Activated CD4-positive, alpha-beta memory T cell treated with anti-CD3 and anti-CD28 coated beads for 36 hours (primary cell): ENCODE measurements at regions of chr14 and their contacts with region 1.

Region 1: GRCh38 chr14:71103662-71104484 is 196.6 kb downstream of the PCNX1 start:
- DNase-seq: no peak
- H3K4me3 Mint-ChIP-seq: no peak overlapping the region
- H3K27ac Mint-ChIP-seq: no peak overlapping the region
- H3K4me1 Mint-ChIP-seq: peaks cover 13% of the 10 kb centered on the region
- H3K27me3 Mint-ChIP-seq: no peaks in the 10 kb centered on the region

Region 2: DNA sequence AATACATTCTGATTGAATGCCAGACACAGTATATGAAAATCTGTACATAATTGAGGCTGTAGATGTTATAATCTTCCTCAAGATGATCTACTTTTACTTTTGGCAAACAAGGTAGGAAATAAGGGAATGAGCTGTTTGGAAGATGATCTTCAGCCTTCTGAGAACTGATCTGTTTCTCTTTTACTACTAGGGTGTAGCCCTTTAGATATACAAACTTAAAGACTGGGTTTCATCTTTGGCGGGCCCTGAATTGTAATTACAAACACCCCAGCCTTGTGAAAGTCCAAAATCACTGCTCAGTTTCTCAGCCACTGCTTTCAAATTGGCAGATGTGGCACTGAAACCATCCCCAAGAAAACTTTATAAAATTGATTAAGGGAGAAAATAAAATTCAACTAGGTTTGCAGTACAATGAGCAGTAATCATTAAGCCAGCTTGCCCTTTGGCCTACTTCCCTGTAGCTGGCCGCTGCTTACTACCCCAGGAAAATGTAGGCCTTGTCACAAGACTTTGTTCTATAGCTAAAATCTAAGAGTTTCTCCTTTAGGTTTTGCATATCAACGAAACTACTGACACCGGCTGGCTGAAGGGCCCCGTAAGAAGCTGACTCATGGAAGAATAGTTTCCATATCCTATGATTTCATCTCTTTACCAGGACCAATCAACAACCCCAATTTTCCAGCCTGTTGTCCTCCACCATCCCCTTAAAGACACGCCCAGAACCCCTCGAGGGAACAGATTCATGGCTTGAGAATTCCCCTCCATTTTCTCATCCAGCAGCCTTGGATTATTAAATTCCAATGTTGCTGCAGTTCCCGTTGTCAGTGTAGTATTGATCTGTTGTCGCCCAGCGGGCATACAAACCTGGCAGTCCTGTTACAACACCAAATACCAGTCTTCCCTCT is 14.2 kb after region 1 on chr14:
- CTCF ChIA-PET with region 1: interaction called, 17 read pairs
- POLR2A ChIA-PET with region 1: interaction called, 3 read pairs
- intact Hi-C with region 1: no loop called
- DNase-seq: peak; percentile 23
- H3K4me3 Mint-ChIP-seq: no peak overlapping the region
- H3K27ac Mint-ChIP-seq: peak overlapping the region; percentile 85
- H3K4me1 Mint-ChIP-seq: peaks cover 24% of the 10 kb centered on the region
- H3K27me3 Mint-ChIP-seq: no peaks in the 10 kb centered on the region

Region 3: DNA sequence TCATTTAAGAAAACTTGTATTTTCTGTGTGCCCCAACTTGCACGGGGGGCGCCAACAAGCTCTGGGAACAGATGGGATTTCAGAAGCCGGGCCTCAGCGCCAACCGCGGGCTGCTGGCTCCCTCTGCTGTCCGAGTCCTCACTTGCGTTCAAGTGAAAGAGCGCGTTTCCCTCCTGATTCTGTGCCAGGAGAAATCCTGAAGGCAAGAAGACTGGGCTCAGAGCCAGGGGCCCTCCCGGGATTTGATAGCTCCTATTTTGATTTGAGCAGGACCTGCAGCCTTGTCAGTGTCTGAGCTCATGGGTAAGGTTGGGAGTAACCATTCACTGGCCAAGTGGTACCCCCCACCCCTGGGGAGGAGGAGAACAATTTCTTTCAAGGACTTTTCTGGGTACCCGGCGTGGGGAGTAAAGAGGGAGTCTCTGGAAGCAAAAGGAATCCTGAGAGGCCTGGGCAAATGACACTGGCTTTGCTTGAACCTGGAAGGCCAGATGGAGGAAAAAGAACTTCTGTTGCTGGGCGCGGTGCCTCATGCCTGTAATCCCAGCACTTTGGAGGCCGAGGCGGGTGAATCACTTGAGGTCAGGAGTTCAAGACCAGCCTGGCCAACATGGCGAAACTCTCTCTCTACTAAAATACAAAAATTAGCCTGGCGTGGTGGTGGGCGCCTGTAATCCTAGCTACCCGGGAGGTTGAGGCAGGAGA is 649.4 kb after region 1 on chr14:
- CTCF ChIA-PET with region 1: interaction called, 47 read pairs
- POLR2A ChIA-PET with region 1: no interaction called
- intact Hi-C with region 1: no loop called
- DNase-seq: peak; percentile 79
- H3K4me3 Mint-ChIP-seq: no peak overlapping the region
- H3K27ac Mint-ChIP-seq: no peak overlapping the region
- H3K4me1 Mint-ChIP-seq: no peaks in the 10 kb centered on the region
- H3K27me3 Mint-ChIP-seq: peaks cover 3% of the 10 kb centered on the region

Region 4: GRCh38 chr14:71933001-71933587 is 829.2 kb after region 1 on chr14:
- CTCF ChIA-PET with region 1: no interaction called
- POLR2A ChIA-PET with region 1: no interaction called
- intact Hi-C with region 1: no loop called
- DNase-seq: peak; percentile 34
- H3K4me3 Mint-ChIP-seq: peak overlapping the region; percentile 51
- H3K27ac Mint-ChIP-seq: no peak overlapping the region
- H3K4me1 Mint-ChIP-seq: peaks cover 18% of the 10 kb centered on the region
- H3K27me3 Mint-ChIP-seq: peaks cover 54% of the 10 kb centered on the region

Region 5: DNA sequence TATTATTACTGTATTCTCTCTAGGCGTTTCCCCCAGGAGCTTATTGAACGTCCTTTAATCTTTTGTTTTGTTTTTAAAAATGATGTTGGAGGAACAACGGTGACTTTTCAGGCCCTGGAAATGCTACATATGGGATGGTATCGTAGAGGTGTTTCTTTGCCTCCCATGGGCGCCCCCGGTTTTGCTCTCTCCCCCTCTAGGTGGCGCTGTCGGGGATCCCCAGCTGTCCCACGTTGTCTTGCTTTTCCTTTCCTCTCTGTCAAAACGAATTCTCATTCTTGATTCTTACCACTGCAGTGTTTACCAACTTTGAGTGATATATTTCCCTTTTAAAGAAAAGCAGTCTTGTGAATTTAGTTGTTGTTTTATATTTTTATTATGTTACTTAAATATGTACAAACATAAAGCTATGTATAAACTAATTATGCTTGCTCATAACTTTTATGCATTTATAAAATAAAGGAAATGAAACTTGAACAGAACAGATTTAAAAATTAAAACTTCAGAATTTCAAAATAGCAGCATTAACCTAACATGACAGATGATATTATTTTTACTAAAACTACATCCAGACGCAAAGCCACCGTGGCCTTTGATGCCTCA is 1000.2 kb after region 1 on chr14:
- CTCF ChIA-PET with region 1: no interaction called
- POLR2A ChIA-PET with region 1: no interaction called
- intact Hi-C with region 1: no loop called
- DNase-seq: peak; percentile 62
- H3K4me3 Mint-ChIP-seq: no peak overlapping the region
- H3K27ac Mint-ChIP-seq: no peak overlapping the region
- H3K4me1 Mint-ChIP-seq: no peaks in the 10 kb centered on the region
- H3K27me3 Mint-ChIP-seq: peaks cover 15% of the 10 kb centered on the region